ENCODE measurements at regions of chr11 and their contacts with region 1.

Region 1: GRCh38 chr11:113305440-113306336 is 8.7 kb upstream of the TTC12 start:
- DNase-seq: peak; percentile 76 to 87
- ATAC-seq: peak; percentile 92 to 99 (median 94)
- H3K4me3 ChIP-seq: no peak overlapping the region
- H3K27ac ChIP-seq: no peak overlapping the region
- H3K4me1 ChIP-seq: no peaks in the 10 kb centered on the region
- H3K27me3 ChIP-seq: no peaks in the 10 kb centered on the region
- CTCF ChIP-seq: peak; percentile 95

Region 2: GRCh38 chr11:113242767-113243397 is 62.8 kb before region 1 on chr11:
- intact Hi-C with region 1: no loop called
- DNase-seq: no peak
- ATAC-seq: peak in 3 of 4 donors; percentile 44 to 46 (median 46)
- H3K4me3 ChIP-seq: peak overlapping the region; percentile 51
- H3K27ac ChIP-seq: peak overlapping the region; percentile 46
- H3K4me1 ChIP-seq: no peaks in the 10 kb centered on the region
- H3K27me3 ChIP-seq: peaks cover 0 to 10% (median 0%) of the 10 kb centered on the region in 3 donors
- CTCF ChIP-seq: no peak

Region 3: GRCh38 chr11:113261709-113262475 is 43.8 kb before region 1 on chr11:
- intact Hi-C with region 1: no loop called
- DNase-seq: no peak
- ATAC-seq: no peak
- H3K4me3 ChIP-seq: no peak overlapping the region
- H3K27ac ChIP-seq: no peak overlapping the region
- H3K4me1 ChIP-seq: no peaks in the 10 kb centered on the region
- H3K27me3 ChIP-seq: no peaks in the 10 kb centered on the region
- CTCF ChIP-seq: no peak

Region 4: DNA sequence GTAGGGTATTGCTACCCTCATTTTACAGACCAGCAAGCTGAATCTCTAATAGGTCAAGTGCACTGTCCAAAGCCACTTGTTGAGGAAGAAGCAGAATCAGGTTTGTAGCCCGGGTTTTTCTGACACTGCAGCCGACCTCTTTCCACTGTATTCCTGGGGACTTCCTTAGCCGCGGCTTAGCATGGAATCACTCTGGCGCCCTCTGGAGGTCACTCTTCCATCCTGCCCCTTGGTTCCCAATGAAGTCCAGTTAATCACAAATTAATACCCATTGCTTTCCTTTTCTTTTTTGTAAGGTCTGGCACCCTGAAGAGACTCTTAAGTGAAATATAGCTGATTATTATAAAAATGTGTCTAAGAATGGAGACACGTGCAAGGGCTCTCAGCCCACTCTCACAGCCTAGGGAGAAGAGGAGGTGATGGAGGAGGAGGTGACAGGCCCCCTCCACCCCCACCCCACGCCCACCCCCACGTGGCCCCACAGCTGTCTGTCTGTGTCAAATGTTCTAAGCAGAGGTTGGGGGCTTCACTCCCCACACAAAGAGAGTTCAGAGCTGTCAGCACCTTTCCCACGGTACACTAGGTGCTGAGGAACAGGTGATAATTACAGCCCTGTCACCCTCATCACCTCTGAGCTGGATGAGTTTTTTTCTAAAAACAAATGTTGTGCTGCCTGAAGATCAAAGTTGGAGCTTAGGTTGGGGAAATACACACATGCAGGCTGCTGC is 227.2 kb after region 1 on chr11:
- intact Hi-C with region 1: loop called (anchors 1 to 5 kb)
- DNase-seq: peak; percentile 66 to 80
- ATAC-seq: peak; percentile 73 to 91 (median 74)
- H3K4me3 ChIP-seq: no peak overlapping the region
- H3K27ac ChIP-seq: no peak overlapping the region
- H3K4me1 ChIP-seq: peaks cover 15% of the 10 kb centered on the region
- H3K27me3 ChIP-seq: no peaks in the 10 kb centered on the region
- CTCF ChIP-seq: peak; percentile 81

Measured in psoas muscle (tissue), 8 donors.